IMR-90 (cell line): ENCODE measurements at regions of chr1 and their contacts with region 1.

Region 1: DNA sequence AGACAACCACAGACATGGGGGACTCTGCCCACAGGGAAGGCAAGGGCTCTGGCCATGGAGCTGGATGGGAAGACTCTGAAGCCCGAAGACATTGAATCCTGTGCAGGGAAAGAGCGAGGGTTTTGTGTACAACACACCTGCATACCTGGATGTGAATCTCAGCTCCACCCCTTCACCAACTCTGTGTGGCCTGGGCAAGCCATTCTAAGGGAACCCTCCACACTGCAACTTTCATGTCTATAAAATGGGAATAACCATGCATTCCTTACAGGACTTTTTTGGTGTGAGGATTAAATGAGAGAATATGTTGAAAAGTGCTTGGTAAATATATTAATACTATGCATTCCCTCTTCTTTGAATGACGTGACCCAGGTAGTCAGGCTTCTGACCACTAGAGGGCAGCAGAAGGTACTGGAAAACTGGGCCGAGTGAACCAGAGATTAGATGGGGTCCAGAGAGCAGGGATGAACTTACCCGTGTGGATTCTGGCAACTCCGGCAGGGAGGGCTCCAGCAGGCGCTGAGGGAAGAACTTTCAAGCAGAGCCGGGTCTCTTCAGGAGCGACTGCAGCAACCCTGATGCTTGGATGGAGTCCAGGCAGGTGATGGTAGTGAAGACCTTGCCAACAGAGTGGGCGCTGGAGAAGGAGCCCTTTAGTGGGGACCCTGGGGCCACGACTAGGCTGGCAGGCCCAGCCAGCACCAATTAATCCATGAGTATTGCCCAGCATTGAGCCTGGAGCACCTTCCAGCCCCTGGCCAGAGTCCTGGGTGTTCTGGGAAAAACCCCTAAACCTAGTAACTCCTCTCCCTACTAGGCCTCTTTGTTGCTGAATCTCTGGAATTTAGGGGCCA is 834 bp upstream of the ELF3 start:
- DNase-seq: peak; percentile 76
- ATAC-seq: peak; percentile 89
- H3K4me3 ChIP-seq: no peak overlapping the region
- H3K27ac ChIP-seq: no peak overlapping the region
- H3K4me1 ChIP-seq: peaks cover 2% of the 10 kb centered on the region; the same call in 1 of the 2 replicates
- H3K27me3 ChIP-seq: 0 out of 2 replicates have a peak, but pooled peaks cover 2% of the 10 kb centered on the region
- CTCF ChIP-seq: peak; percentile 94
- POLR2A ChIP-seq: no peak
- RAD21 ChIP-seq: peak; percentile 91

Region 2: DNA sequence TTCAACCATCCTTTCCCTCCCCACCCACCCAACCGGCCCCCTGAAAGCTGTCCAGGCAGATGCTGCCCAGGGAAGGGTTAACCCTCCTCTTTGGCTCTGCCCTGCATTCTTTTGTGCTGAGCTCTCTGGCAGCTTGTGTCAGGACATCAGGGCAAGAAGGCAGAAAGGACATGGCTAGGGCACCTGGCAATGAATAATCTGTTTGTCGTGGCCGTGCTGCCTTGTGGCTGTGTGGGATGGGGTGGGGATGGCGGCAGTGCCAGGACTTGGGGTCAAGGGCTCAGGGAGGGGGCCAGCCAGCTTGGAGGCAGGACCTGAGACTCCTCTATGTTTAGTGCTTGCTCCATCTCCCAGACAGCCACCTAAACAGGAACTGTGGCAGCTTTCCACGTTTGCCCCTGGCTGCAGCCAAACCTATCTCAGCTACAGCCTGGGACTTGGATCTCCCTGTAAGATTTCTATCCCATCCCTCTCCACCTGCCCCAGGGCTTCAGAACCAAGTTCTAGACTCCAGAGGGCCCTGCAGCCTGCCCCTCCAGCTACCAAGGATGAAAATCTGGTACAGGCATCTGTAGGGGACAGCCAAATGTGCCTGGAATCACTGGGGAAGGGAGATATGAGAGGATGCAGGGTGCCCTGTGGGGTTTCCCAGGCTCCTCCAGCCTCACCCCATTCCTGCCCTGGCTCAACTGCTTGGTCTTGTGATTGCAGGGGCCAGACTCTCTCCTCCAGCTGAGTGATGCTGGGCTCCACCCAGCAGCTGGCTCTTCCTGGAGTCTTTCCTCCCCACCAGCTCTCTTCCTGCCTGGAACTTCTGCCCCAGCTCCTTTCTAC is 103.5 kb after region 1 on chr1:
- CTCF ChIA-PET with region 1: interaction called, 3 read pairs
- POLR2A ChIA-PET with region 1: no interaction called
- dilution Hi-C with region 1: no loop called
- in situ Hi-C with region 1: loop called (anchors 5 kb)
- intact Hi-C with region 1: no loop called
- DNase-seq: peak; percentile 11
- ATAC-seq: peak; percentile 73
- H3K4me3 ChIP-seq: no peak overlapping the region
- H3K27ac ChIP-seq: no peak overlapping the region
- H3K4me1 ChIP-seq: peaks cover 6% of the 10 kb centered on the region; the same call in 1 of the 2 replicates
- H3K27me3 ChIP-seq: 0 out of 2 replicates have a peak, but pooled peaks cover 2% of the 10 kb centered on the region
- CTCF ChIP-seq: no peak
- POLR2A ChIP-seq: no peak
- RAD21 ChIP-seq: no peak

Region 3: GRCh38 chr1:202135221-202135721 is 125.7 kb after region 1 on chr1:
- CTCF ChIA-PET with region 1: no interaction called
- POLR2A ChIA-PET with region 1: no interaction called
- dilution Hi-C with region 1: no loop called
- in situ Hi-C with region 1: no loop called
- intact Hi-C with region 1: loop called (anchors 5 kb)
- DNase-seq: peak; percentile 54
- ATAC-seq: peak; percentile 93
- H3K4me3 ChIP-seq: no peak overlapping the region
- H3K27ac ChIP-seq: no peak overlapping the region
- H3K4me1 ChIP-seq: 0 out of 2 replicates have a peak, but pooled peaks cover 1% of the 10 kb centered on the region
- H3K27me3 ChIP-seq: no peaks in the 10 kb centered on the region
- CTCF ChIP-seq: peak; percentile 78
- POLR2A ChIP-seq: no peak
- RAD21 ChIP-seq: peak; percentile 72